ENCODE measurements at regions of chr2 and their contacts with region 1.

Region 1: GRCh38 chr2:159064446-159065301 is 96.2 kb downstream of the TANC1 start:
- DNase-seq: peak; percentile 60
- H3K4me3 Mint-ChIP-seq: no peak overlapping the region
- H3K27ac Mint-ChIP-seq: peak overlapping the region; percentile 63
- H3K4me1 Mint-ChIP-seq: peaks cover 20% of the 10 kb centered on the region
- H3K27me3 Mint-ChIP-seq: no peaks in the 10 kb centered on the region
- CTCF ChIP-seq: no peak

Region 2: DNA sequence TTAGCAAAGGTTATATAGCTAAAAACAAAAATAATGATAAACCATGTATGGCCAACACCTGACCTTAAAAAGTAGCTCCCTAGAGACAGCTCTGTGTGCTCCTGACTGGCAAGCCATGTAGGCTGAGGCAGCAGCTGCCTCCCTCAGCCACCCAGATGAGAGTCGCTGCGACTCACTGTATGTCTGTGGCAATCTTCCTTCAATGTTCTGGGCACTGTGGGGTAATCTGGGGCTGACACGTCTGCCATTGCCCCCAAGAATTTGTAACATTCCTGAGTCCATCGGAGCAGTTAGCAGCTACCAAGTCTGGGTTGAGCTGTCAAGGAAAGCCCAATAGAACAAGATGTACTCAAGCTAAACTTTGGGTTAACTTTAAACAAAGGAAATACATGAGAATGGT is 376.0 kb before region 1 on chr2:
- CTCF ChIA-PET with region 1: no interaction called
- POLR2A ChIA-PET with region 1: no interaction called
- intact Hi-C with region 1: no loop called
- DNase-seq: peak; percentile 53
- H3K4me3 Mint-ChIP-seq: no peak overlapping the region
- H3K27ac Mint-ChIP-seq: no peak overlapping the region
- H3K4me1 Mint-ChIP-seq: peaks cover 7% of the 10 kb centered on the region
- H3K27me3 Mint-ChIP-seq: no peaks in the 10 kb centered on the region
- CTCF ChIP-seq: no peak

Region 3: DNA sequence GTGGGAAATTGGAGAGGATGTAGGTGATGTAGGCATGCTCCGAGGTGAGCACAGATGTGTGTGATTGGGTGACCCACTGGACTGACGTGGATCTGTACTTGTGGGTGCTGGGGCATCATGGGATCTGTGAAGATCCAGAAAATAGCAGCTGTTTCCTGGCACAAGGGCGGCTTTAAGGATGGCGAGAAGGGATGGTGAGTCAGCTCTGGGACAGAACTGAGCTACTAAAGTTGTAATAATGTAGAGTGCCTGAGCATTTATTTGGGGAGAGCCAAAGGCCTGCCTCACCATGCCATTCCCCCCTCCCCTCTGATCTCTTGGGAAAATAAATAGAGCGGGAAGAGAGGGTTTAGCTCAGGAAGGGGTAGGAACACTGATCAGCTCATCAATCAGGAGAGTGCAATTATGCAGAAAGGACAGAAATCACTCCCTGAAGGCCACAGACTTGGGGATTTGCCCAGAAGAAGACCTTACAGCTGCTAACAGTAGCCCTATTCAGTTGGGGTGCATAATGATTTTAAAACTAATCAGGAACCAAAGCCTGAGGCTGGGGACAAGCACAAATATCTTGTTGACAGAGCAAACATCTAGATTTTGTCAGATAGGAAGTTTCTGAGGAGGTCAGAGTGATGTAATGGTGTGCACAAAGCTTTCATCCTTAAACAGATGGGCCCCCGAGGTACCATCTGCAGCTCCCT is 66.0 kb before region 1 on chr2:
- CTCF ChIA-PET with region 1: no interaction called
- POLR2A ChIA-PET with region 1: interaction called, 3 read pairs
- intact Hi-C with region 1: loop called (anchors 2 kb)
- DNase-seq: peak; percentile 70
- H3K4me3 Mint-ChIP-seq: peak overlapping the region; percentile 28
- H3K27ac Mint-ChIP-seq: peak overlapping the region; percentile 83
- H3K4me1 Mint-ChIP-seq: peaks cover 18% of the 10 kb centered on the region
- H3K27me3 Mint-ChIP-seq: no peaks in the 10 kb centered on the region
- CTCF ChIP-seq: no peak

Region 4: DNA sequence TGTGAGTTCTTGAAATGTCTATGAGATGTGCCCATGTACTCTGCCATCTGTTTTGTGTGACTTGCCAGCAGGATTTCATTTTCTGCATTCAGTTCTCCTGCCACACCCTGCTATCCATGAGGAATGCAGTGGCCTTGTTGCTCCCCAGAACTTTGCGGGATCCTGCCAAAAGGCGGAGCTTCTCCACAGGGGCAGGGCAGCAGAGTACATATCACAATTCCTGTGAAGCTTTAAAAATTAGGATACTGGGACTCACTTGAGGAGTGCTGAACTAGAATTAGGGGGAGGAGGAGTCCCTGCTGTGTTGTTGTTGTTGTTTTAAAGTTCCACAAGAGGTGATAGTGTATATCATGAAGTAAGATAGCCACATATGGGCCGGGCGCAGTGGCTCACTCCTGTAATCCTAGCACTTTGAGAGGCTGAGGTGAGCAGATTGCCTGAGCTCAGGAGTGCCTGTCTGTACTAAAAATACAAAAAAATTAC is 19.8 kb before region 1 on chr2:
- CTCF ChIA-PET with region 1: interaction called, 5 read pairs
- POLR2A ChIA-PET with region 1: interaction called, 11 read pairs
- intact Hi-C with region 1: no loop called
- DNase-seq: peak; percentile 72
- H3K4me3 Mint-ChIP-seq: peak overlapping the region; percentile 59
- H3K27ac Mint-ChIP-seq: peak overlapping the region; percentile 77
- H3K4me1 Mint-ChIP-seq: peaks cover 63% of the 10 kb centered on the region
- H3K27me3 Mint-ChIP-seq: no peaks in the 10 kb centered on the region
- CTCF ChIP-seq: no peak

Measured in MCF 10A (cell line).